ENCODE measurements at regions of chr1 and their contacts with region 1.

Region 1: DNA sequence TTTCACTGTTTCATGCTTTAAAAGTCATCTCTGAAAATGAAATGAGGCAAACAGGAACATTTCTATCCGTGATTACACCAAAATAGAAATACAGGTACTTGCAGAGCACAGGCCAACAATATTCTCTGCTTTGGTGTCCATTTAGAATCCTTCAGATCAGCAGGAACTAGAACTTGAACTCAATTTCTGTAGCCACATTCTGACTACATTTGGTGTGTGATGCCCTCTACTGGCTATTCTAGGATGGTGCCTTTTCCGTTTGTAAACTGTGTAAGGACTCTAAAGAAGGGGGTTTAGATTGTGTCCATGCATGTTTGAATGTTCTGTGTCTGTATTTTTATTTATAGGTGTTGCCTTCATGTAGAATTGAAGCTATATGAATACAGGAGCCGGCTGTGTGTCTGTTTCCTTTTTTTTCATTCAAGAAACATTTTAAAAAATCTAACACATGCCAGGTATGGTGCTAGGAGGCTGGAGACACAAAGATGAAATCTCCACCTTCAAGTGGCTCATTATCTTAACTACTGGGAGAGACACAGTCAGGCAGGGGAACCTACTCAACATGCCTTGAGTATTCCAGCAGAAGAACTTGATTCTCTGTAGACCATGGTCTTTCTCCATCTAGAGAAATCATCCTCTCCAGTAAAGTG is 7.6 kb upstream of the ZNF326 start:
- DNase-seq: peak; percentile 81
- H3K4me3 Mint-ChIP-seq: no peak overlapping the region
- H3K27ac Mint-ChIP-seq: no peak overlapping the region
- H3K4me1 Mint-ChIP-seq: peaks cover 12% of the 10 kb centered on the region
- H3K27me3 Mint-ChIP-seq: no peaks in the 10 kb centered on the region
- CTCF ChIP-seq: peak; percentile 84

Region 2: GRCh38 chr1:89780721-89781120 is 206.6 kb before region 1 on chr1:
- CTCF ChIA-PET with region 1: interaction called, 37 read pairs
- POLR2A ChIA-PET with region 1: no interaction called
- intact Hi-C with region 1: loop called (anchors 1 kb)
- DNase-seq: peak; percentile 61
- H3K4me3 Mint-ChIP-seq: no peak overlapping the region
- H3K27ac Mint-ChIP-seq: no peak overlapping the region
- H3K4me1 Mint-ChIP-seq: no peaks in the 10 kb centered on the region
- H3K27me3 Mint-ChIP-seq: no peaks in the 10 kb centered on the region
- CTCF ChIP-seq: peak; percentile 38

Region 3: GRCh38 chr1:89820422-89821321 is 166.6 kb before region 1 on chr1 and contains the start of gene LRRC8D:
- CTCF ChIA-PET with region 1: interaction called, 11 read pairs
- POLR2A ChIA-PET with region 1: interaction called, 11 read pairs
- intact Hi-C with region 1: no loop called
- DNase-seq: peak; percentile 76
- H3K4me3 Mint-ChIP-seq: peak within 1 kb of the TSS; percentile 89
- H3K27ac Mint-ChIP-seq: no peak within 1 kb of the TSS
- H3K4me1 Mint-ChIP-seq: peaks cover 38% of the 10 kb centered on the region
- H3K27me3 Mint-ChIP-seq: peaks cover 6% of the 10 kb centered on the region
- CTCF ChIP-seq: no peak
- total RNA-seq, gene LRRC8D: 42.0 and 43.7 TPM in 2 replicates

Region 4: DNA sequence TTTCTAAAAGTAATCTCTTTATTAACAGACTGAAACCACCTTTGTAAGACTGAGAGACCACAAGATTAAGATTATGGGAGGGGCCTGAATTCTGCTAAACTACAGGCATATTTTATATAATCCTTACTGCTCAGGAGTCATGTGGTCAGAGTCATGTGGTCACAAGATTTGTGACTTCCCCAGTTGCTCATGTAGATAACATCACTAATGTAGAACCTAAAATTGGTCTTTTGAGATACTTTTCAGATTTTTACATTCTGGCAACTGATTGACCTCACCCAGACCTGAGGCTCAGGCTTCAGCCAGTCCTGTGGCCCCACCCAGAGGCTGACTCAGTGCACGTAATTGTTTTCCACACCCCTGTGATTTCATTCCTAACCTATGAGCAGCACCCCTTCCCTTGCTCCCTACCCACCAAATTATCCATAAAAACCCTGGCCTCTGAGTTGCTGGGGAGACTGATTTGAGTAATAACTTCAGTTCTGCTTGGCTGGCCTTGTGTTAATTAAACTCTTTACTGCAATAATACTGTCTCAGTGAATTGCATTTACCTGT is 34.1 kb before region 1 on chr1:
- CTCF ChIA-PET with region 1: interaction called, 7 read pairs
- POLR2A ChIA-PET with region 1: no interaction called
- intact Hi-C with region 1: loop called (anchors 2 kb)
- DNase-seq: peak; percentile 87
- H3K4me3 Mint-ChIP-seq: no peak overlapping the region
- H3K27ac Mint-ChIP-seq: peak overlapping the region; percentile 64
- H3K4me1 Mint-ChIP-seq: peaks cover 17% of the 10 kb centered on the region
- H3K27me3 Mint-ChIP-seq: no peaks in the 10 kb centered on the region
- CTCF ChIP-seq: peak; percentile 24

Measured in MCF 10A (cell line).